Mucosa of descending colon (tissue), 3 donors: ENCODE measurements at regions of chr18 and their contacts with region 1.

Region 1: GRCh38 chr18:62183578-62184195 is 3.2 kb downstream of the PIGN start:
- DNase-seq: peak in 1 of 3 donors; percentile 76
- ATAC-seq: no peak
- H3K4me3 ChIP-seq: no peak overlapping the region
- H3K4me1 ChIP-seq: peaks cover 3% of the 10 kb centered on the region
- CTCF ChIP-seq: peak; percentile 85

Region 2: DNA sequence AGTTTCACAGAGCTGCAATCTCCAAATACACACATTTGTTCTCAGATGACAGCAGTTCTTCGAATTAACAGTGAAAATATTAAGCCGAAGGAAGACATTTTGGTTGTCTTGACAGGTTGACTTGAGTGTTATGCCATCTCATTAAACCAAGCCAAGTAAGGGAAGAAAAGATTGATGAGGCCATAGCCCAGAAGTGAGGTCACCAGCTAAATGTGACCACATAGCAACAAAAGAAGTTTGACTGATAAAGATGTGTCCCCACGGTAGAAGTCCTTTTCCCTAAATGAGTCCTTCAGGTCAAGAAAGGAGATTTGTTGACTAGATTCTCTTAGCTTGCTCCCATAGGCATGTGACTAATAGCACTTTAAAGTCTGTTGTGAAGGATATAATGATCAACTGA is 694.4 kb before region 1 on chr18:
- intact Hi-C with region 1: no loop called
- DNase-seq: no peak
- ATAC-seq: no peak
- H3K4me3 ChIP-seq: no peak overlapping the region
- H3K4me1 ChIP-seq: no peaks in the 10 kb centered on the region
- CTCF ChIP-seq: no peak

Region 3: GRCh38 chr18:62118328-62118727 is 65.4 kb before region 1 on chr18:
- intact Hi-C with region 1: no loop called
- DNase-seq: no peak
- ATAC-seq: no peak
- H3K4me3 ChIP-seq: no peak overlapping the region
- H3K4me1 ChIP-seq: no peaks in the 10 kb centered on the region
- CTCF ChIP-seq: no peak

Region 4: GRCh38 chr18:62249478-62250097 is 65.9 kb after region 1 on chr18:
- intact Hi-C with region 1: loop called in 1 of 2 experiments (anchors 5 kb)
- DNase-seq: peak in 2 of 3 donors; percentile 47 to 98
- ATAC-seq: peak; percentile 68
- H3K4me3 ChIP-seq: no peak overlapping the region
- H3K4me1 ChIP-seq: no peaks in the 10 kb centered on the region
- CTCF ChIP-seq: peak; percentile 70